ENCODE measurements at regions of chr7 and their contacts with region 1.

Region 1: GRCh38 chr7:76069238-76069638 is 21.3 kb downstream of the MDH2 start:
- DNase-seq: no peak
- ATAC-seq: peak; percentile 50
- H3K4me3 ChIP-seq: no peak overlapping the region
- H3K4me3 Mint-ChIP-seq: peak overlapping the region in 1 of 10 donors; percentile 43
- H3K27ac ChIP-seq: no peak overlapping the region
- H3K27ac Mint-ChIP-seq: peak overlapping the region in 3 of 9 donors; percentile 44 to 76 (median 46)
- H3K4me1 ChIP-seq: no peaks in the 10 kb centered on the region
- H3K4me1 Mint-ChIP-seq: no peaks in the 10 kb centered on the region
- H3K27me3 ChIP-seq: no peaks in the 10 kb centered on the region
- H3K27me3 Mint-ChIP-seq: no peaks in the 10 kb centered on the region

Region 2: GRCh38 chr7:75989500-75990388 is 79.5 kb before region 1 on chr7:
- CTCF ChIA-PET with region 1: no interaction called
- POLR2A ChIA-PET with region 1: no interaction called
- intact Hi-C with region 1: no loop called
- DNase-seq: no peak
- ATAC-seq: no peak
- H3K4me3 ChIP-seq: no peak overlapping the region
- H3K4me3 Mint-ChIP-seq: peak overlapping the region in 1 of 10 donors; percentile 53
- H3K27ac ChIP-seq: no peak overlapping the region
- H3K27ac Mint-ChIP-seq: peak overlapping the region in 6 of 9 donors; percentile 3 to 73 (median 62)
- H3K4me1 ChIP-seq: peaks cover 2 to 6% of the 10 kb centered on the region in 2 donors
- H3K4me1 Mint-ChIP-seq: peaks cover 11 to 27% (median 16%) of the 10 kb centered on the region in 7 donors
- H3K27me3 ChIP-seq: no peaks in the 10 kb centered on the region
- H3K27me3 Mint-ChIP-seq: no peaks in the 10 kb centered on the region

Region 3: GRCh38 chr7:76031964-76032363 is 37.3 kb before region 1 on chr7:
- CTCF ChIA-PET with region 1: no interaction called
- POLR2A ChIA-PET with region 1: no interaction called
- intact Hi-C with region 1: loop called in 1 of 2 experiments (anchors 1 kb)
- DNase-seq: no peak
- ATAC-seq: no peak
- H3K4me3 ChIP-seq: no peak overlapping the region
- H3K4me3 Mint-ChIP-seq: no peak overlapping the region
- H3K27ac ChIP-seq: no peak overlapping the region
- H3K27ac Mint-ChIP-seq: peak overlapping the region in 1 of 9 donors; percentile 38
- H3K4me1 ChIP-seq: no peaks in the 10 kb centered on the region
- H3K4me1 Mint-ChIP-seq: peaks cover 0 to 20% (median 6%) of the 10 kb centered on the region in 7 donors
- H3K27me3 ChIP-seq: no peaks in the 10 kb centered on the region
- H3K27me3 Mint-ChIP-seq: no peaks in the 10 kb centered on the region